Lower leg skin (tissue), 4 donors: ENCODE measurements at regions of chrX and their contacts with region 1.

Region 1: GRCh38 chrX:72021975-72022374 is 109.7 kb downstream of the RTL5 start:
- DNase-seq: peak in 1 of 2 donors; percentile 48
- H3K4me3 ChIP-seq: no peak overlapping the region
- CTCF ChIP-seq: no peak
- POLR2A ChIP-seq: no peak

Region 2: DNA sequence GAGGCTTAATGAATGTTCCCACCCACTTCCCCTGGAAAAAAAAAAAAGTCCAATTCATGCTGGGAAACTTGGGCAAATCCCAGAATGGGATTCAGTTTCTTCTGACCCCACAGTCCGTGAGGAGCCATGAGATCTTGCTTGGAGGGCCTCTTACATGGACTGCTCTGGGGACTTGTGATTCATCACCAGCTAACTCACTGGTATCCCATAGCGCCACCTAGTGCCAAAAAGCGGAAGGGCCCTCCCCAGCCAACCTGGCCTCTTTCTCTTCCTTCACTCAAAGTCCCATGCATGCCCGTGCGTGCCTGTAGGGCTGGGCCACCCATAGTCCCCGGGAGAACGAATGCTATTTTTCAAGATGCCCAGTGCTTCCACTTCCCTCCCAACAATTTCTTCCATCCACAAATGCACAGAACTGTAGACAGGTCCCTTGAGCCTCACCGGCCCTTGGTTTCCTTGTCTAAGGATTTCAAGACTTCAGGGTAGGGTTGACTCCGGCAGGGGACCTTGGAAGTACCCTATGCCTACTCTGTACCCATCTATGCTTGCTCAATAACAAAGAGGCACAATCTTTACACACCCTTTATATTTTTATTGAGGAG is 104.7 kb after region 1 on chrX:
- intact Hi-C with region 1: loop called (anchors 10 kb)
- DNase-seq: peak; percentile 84 to 98
- H3K4me3 ChIP-seq: no peak overlapping the region
- CTCF ChIP-seq: peak in 1 of 3 donors; percentile 49
- POLR2A ChIP-seq: no peak